Activated T-helper 2 cell treated with anti-CD3 and anti-CD28 coated beads, Interferon-gamma antibody, Interleukin-2, Interleukin-4, amounts not matched to agents 10 μg/mL and 5 μg/mL and 100 μg/mL, durations not matched to agents 14 hours and 24 hours and 36 hours (primary cell): ENCODE measurements at regions of chr4 and their contacts with region 1.

Region 1: DNA sequence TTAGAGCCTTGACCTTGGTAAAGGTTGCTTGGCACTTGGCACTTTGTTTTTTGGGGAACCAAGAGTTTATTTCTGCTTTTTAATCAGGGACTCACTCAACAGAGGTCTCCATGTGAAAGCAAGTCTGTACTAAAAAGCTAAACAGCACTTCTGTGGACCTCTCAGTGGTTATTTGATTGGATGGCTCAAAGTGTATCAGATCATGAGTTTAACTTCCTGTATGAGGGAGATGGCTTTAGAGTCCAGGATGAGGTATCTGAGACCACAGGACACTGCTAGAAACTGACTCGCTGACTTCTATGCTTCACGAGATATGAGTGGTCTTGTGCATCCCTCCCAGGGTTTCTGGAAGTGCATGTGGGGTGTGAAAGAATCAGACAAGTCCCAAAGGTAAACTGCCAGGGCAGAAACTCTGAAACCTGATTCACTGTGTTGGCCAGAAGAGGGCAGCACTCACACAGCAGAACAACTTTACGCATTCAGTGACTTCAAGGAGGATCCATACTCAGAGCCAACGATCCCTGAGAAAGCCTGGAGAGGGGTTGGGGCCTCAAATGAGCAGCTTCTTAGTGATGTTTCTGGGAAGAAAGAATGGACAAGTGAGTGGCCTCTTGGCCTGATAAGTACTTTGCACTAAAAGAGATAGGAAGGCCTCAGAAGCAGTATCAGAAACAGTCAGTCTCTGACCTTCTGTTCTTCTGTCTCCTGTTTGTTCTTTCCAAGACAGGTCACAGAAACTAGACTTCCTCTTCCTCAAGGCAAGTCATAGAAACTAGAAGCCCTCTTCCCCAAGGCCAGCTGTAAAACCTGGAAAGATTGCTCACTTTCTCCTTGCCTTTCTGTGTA is 220.3 kb upstream of the CXCL13 start:
- DNase-seq: peak; percentile 29
- H3K4me3 Mint-ChIP-seq: no peak overlapping the region
- H3K27ac Mint-ChIP-seq: no peak overlapping the region
- H3K4me1 Mint-ChIP-seq: peaks cover 11% of the 10 kb centered on the region
- H3K27me3 Mint-ChIP-seq: peaks cover 9% of the 10 kb centered on the region

Region 2: DNA sequence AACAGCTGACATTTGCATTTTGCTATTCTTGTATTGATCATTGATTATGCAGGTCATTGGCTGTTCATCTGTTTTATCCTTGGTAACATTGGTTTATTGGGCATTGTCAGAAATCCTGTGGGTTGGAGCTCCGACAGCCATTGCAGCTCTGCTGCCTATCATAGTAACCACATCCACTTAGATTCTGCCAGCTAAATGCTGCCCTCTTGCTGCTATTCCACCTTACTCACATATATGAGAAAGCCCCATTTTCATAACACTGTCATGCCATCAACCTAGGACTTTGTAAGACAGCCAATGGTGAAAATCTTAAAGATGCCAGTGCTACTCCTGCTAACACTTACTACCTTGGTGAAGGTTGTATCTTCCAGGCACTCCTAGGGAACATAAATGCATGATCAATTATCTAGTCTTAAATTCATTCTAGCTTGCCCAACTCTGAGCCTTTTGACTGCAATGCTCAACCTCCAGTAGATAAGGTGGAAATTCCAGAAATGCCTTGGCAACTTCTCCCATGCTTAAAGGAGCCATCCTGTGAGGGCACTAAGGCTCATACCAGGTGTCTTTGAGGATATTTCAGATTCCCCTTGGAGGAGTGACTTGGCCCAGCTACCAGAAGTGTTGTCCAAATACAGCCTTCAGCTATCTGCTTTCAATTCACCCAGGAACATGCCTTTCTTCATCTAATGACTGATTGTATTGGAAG is 33.1 kb after region 1 on chr4:
- intact Hi-C with region 1: loop called (anchors 1 kb)
- DNase-seq: no peak
- H3K4me3 Mint-ChIP-seq: no peak overlapping the region
- H3K27ac Mint-ChIP-seq: no peak overlapping the region
- H3K4me1 Mint-ChIP-seq: no peaks in the 10 kb centered on the region
- H3K27me3 Mint-ChIP-seq: peaks cover 26% of the 10 kb centered on the region

Region 3: DNA sequence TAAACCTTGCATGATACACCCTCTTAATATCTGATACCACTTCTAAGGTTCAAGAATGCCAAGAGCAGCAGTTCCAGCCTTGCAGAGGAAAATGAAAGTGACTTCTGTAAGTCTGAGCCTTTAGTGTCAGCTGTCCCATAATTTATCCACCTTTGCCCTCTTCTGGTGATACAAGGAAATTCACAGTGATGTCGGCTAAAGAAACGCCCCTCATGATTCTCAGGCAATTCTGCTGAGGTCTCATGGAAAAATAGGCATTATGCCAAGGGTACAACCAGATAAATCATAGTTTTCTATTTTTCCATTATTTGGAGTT is 48.0 kb after region 1 on chr4:
- intact Hi-C with region 1: loop called (anchors 1 kb)
- DNase-seq: no peak
- H3K4me3 Mint-ChIP-seq: no peak overlapping the region
- H3K27ac Mint-ChIP-seq: no peak overlapping the region
- H3K4me1 Mint-ChIP-seq: peaks cover 3% of the 10 kb centered on the region
- H3K27me3 Mint-ChIP-seq: peaks cover 4% of the 10 kb centered on the region

Region 4: DNA sequence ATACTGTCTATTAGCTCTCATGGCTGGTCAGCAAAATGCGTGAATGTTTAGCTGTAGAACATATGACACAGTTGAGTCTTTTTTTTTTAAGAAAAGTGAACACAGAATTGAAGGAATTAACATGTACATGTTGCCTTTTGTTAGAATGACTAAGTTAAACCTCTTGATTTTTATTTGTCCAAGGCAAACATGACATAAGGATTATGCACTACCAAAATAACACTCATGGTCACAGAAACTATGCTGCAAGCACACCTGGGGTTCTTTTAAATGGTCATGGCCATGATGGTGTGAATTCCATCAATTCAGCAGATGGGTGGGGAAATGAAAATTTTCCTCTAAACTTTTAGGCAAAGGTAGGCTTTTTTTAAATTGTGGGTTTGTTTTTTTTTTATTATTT is 140.2 kb after region 1 on chr4:
- intact Hi-C with region 1: no loop called
- DNase-seq: no peak
- H3K4me3 Mint-ChIP-seq: no peak overlapping the region
- H3K27ac Mint-ChIP-seq: no peak overlapping the region
- H3K4me1 Mint-ChIP-seq: peaks cover 5% of the 10 kb centered on the region
- H3K27me3 Mint-ChIP-seq: peaks cover 10% of the 10 kb centered on the region

Region 5: DNA sequence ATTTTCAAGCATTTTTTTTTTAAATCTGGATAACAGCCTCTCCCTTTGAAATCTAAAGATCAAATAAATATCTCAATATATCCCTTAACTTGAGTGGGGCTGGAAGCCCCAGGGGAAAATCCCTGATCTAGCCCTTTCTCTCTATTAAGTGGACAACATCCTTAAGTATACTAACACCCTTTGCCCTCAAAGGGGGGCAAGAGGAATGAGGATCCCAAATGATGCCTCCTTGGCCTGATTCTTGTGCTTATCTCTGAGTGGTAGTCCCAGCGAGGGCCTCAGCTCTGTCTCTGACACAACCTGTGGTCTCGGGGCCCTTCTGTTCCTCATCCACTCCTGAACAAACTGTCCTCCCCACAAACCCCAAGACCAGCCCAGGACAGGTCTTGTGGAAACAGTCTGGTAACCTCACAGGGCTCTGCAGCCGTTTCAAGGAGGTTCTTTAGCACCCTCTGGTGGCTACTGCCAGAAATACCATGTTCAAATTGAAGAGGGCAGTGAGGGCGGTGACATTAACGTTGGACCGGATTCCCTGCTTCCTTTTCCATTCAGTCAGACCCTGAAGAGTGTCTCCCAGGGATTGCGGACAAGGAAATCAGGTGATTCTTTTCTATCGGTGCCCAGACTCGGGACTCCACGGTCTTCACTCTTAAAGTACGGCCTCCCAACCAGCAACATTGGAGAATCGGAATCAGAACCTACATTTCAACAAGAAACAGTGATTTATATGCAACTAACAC is 233.2 kb after region 1 on chr4:
- intact Hi-C with region 1: loop called (anchors 1 kb)
- DNase-seq: peak; percentile 30
- H3K4me3 Mint-ChIP-seq: no peak overlapping the region
- H3K27ac Mint-ChIP-seq: no peak overlapping the region
- H3K4me1 Mint-ChIP-seq: peaks cover 26% of the 10 kb centered on the region
- H3K27me3 Mint-ChIP-seq: peaks cover 28% of the 10 kb centered on the region